MCF 10A (cell line): ENCODE measurements at regions of chr12 and their contacts with region 1.

Region 1: GRCh38 chr12:89461649-89462612 is 62.7 kb downstream of the GALNT4 start:
- DNase-seq: peak; percentile 71
- H3K4me3 Mint-ChIP-seq: peak overlapping the region; percentile 20
- H3K27ac Mint-ChIP-seq: peak overlapping the region; percentile 9
- H3K4me1 Mint-ChIP-seq: peaks cover 8% of the 10 kb centered on the region
- H3K27me3 Mint-ChIP-seq: no peaks in the 10 kb centered on the region
- CTCF ChIP-seq: peak; percentile 48

Region 2: GRCh38 chr12:89019408-89020120 is 442.4 kb before region 1 on chr12:
- CTCF ChIA-PET with region 1: interaction called, 48 read pairs
- POLR2A ChIA-PET with region 1: interaction called, 5 read pairs
- intact Hi-C with region 1: loop called (anchors 1 kb)
- DNase-seq: peak; percentile 90
- H3K4me3 Mint-ChIP-seq: no peak overlapping the region
- H3K27ac Mint-ChIP-seq: no peak overlapping the region
- H3K4me1 Mint-ChIP-seq: peaks cover 12% of the 10 kb centered on the region
- H3K27me3 Mint-ChIP-seq: no peaks in the 10 kb centered on the region
- CTCF ChIP-seq: peak; percentile 81

Region 3: DNA sequence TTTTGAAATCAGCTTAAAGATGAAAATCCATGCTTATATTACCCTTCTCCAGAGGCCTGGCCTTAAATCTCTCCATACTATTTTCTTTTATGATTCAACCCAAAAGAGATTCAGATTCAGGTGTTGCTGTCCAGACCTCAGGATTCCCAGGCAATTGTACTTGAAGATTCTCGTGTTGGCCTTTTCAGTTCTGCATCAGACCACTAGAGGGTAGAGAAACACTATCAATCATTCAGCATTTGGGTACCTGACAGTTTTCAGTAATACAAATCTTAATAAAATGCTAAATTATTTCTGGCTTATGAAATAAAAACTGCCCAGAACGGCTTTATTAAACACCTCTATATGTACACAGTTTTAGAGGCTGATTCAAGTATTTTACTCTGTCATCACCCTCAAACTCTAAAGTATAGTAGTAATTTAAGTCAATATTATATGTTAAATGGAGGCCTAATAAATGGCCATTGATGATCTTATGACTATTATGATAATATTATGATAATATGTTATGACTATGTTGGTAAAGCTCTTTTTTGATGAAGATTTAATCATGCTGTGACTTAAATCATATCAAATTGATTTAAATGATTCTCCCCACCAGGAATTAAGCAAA is 410.8 kb before region 1 on chr12:
- CTCF ChIA-PET with region 1: interaction called, 69 read pairs
- POLR2A ChIA-PET with region 1: interaction called, 5 read pairs
- intact Hi-C with region 1: loop called (anchors 1 kb)
- DNase-seq: peak; percentile 80
- H3K4me3 Mint-ChIP-seq: no peak overlapping the region
- H3K27ac Mint-ChIP-seq: no peak overlapping the region
- H3K4me1 Mint-ChIP-seq: no peaks in the 10 kb centered on the region
- H3K27me3 Mint-ChIP-seq: no peaks in the 10 kb centered on the region
- CTCF ChIP-seq: peak; percentile 74

Region 4: GRCh38 chr12:89179983-89180382 is 281.9 kb before region 1 on chr12:
- CTCF ChIA-PET with region 1: interaction called, 4 read pairs
- POLR2A ChIA-PET with region 1: interaction called, 4 read pairs
- intact Hi-C with region 1: loop called (anchors 1 kb)
- DNase-seq: peak; percentile 100
- H3K4me3 Mint-ChIP-seq: peak overlapping the region; percentile 64
- H3K27ac Mint-ChIP-seq: peak overlapping the region; percentile 78
- H3K4me1 Mint-ChIP-seq: peaks cover 41% of the 10 kb centered on the region
- H3K27me3 Mint-ChIP-seq: no peaks in the 10 kb centered on the region
- CTCF ChIP-seq: no peak

Region 5: DNA sequence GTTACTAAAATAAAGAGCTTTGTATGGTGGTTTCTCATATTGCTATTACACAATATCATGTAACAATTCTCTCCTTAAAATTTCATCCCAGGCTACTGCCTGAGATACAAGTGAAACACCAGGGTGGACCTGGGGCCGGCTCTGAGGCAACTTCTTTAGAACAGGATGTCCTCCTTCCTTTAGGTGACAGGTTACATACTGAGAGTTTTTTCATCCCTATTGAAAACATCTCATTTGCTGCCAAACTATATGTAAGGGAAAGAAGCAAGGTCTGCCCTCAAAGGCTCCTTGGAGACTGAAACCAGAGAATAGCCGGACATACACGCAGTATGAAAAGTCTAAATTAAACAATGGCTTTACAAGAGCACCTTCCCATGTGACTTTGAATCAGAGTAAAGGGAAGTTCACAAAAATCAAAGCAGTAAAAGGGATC is 249.6 kb before region 1 on chr12:
- CTCF ChIA-PET with region 1: no interaction called
- POLR2A ChIA-PET with region 1: no interaction called
- intact Hi-C with region 1: no loop called
- DNase-seq: peak; percentile 72
- H3K4me3 Mint-ChIP-seq: no peak overlapping the region
- H3K27ac Mint-ChIP-seq: peak overlapping the region; percentile 83
- H3K4me1 Mint-ChIP-seq: peaks cover 57% of the 10 kb centered on the region
- H3K27me3 Mint-ChIP-seq: no peaks in the 10 kb centered on the region
- CTCF ChIP-seq: no peak

Region 6: GRCh38 chr12:89345830-89346740 is 115.8 kb before region 1 on chr12:
- CTCF ChIA-PET with region 1: interaction called, 19 read pairs
- POLR2A ChIA-PET with region 1: interaction called, 19 read pairs
- intact Hi-C with region 1: no loop called
- DNase-seq: peak; percentile 78
- H3K4me3 Mint-ChIP-seq: peak overlapping the region; percentile 56
- H3K27ac Mint-ChIP-seq: peak overlapping the region; percentile 96
- H3K4me1 Mint-ChIP-seq: peaks cover 43% of the 10 kb centered on the region
- H3K27me3 Mint-ChIP-seq: no peaks in the 10 kb centered on the region
- CTCF ChIP-seq: no peak

Region 7: GRCh38 chr12:89392391-89392790 is 69.5 kb before region 1 on chr12:
- CTCF ChIA-PET with region 1: no interaction called
- POLR2A ChIA-PET with region 1: no interaction called
- intact Hi-C with region 1: no loop called
- DNase-seq: no peak
- H3K4me3 Mint-ChIP-seq: no peak overlapping the region
- H3K27ac Mint-ChIP-seq: no peak overlapping the region
- H3K4me1 Mint-ChIP-seq: no peaks in the 10 kb centered on the region
- H3K27me3 Mint-ChIP-seq: no peaks in the 10 kb centered on the region
- CTCF ChIP-seq: no peak

Region 8: GRCh38 chr12:89524541-89525285 is 62.8 kb after region 1 on chr12 and contains the start of gene GALNT4:
- CTCF ChIA-PET with region 1: interaction called, 11 read pairs
- POLR2A ChIA-PET with region 1: interaction called, 14 read pairs
- intact Hi-C with region 1: no loop called
- DNase-seq: peak; percentile 91
- H3K4me3 Mint-ChIP-seq: peak within 1 kb of the TSS; percentile 99
- H3K27ac Mint-ChIP-seq: peak within 1 kb of the TSS; percentile 79
- H3K4me1 Mint-ChIP-seq: peaks cover 29% of the 10 kb centered on the region
- H3K27me3 Mint-ChIP-seq: no peaks in the 10 kb centered on the region
- CTCF ChIP-seq: peak; percentile 73
- total RNA-seq, gene GALNT4: 2.6 and 2.8 TPM in 2 replicates